MCF 10A (cell line): ENCODE measurements at regions of chr19 and their contacts with region 1.

Region 1: GRCh38 chr19:11639602-11640471 is 42.6 kb downstream of the ZNF627 start:
- DNase-seq: peak; percentile 98
- H3K4me3 Mint-ChIP-seq: peak overlapping the region; percentile 78
- H3K27ac Mint-ChIP-seq: peak overlapping the region; percentile 46
- H3K4me1 Mint-ChIP-seq: no peaks in the 10 kb centered on the region
- H3K27me3 Mint-ChIP-seq: no peaks in the 10 kb centered on the region
- CTCF ChIP-seq: no peak

Region 2: GRCh38 chr19:11496391-11497163 is 143.3 kb before region 1 on chr19:
- CTCF ChIA-PET with region 1: no interaction called
- POLR2A ChIA-PET with region 1: no interaction called
- intact Hi-C with region 1: no loop called
- DNase-seq: peak; percentile 93
- H3K4me3 Mint-ChIP-seq: no peak overlapping the region
- H3K27ac Mint-ChIP-seq: peak overlapping the region; percentile 40
- H3K4me1 Mint-ChIP-seq: peaks cover 5% of the 10 kb centered on the region
- H3K27me3 Mint-ChIP-seq: no peaks in the 10 kb centered on the region
- CTCF ChIP-seq: peak; percentile 73

Region 3: DNA sequence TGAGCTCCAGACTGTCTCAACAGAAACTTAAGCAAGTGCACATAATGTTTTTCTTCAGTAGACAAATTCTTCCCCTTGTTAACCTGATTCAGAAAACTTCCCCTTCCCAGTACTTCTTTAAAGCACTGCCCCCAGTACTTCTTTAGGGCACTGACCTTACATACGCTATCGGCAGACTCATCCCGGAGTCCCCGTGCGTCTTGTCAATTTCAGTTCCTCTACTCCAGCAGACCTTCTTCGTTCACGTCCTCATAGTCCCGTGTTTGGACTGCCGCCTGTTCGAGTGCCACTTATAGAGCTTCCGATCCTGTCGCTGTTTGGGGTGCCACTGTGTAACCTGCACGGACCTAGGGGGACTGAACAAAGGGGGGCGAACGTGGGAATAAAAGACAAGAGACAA is 13.6 kb before region 1 on chr19:
- CTCF ChIA-PET with region 1: interaction called, 3 read pairs
- POLR2A ChIA-PET with region 1: interaction called, 10 read pairs
- intact Hi-C with region 1: no loop called
- DNase-seq: no peak
- H3K4me3 Mint-ChIP-seq: no peak overlapping the region
- H3K27ac Mint-ChIP-seq: no peak overlapping the region
- H3K4me1 Mint-ChIP-seq: peaks cover 16% of the 10 kb centered on the region
- H3K27me3 Mint-ChIP-seq: no peaks in the 10 kb centered on the region
- CTCF ChIP-seq: no peak